MCF 10A (cell line): ENCODE measurements at regions of chr6 and their contacts with region 1.

Region 1: GRCh38 chr6:56292505-56293181 is 45.3 kb upstream of the COL21A1 start:
- DNase-seq: peak; percentile 71
- H3K4me3 Mint-ChIP-seq: no peak overlapping the region
- H3K27ac Mint-ChIP-seq: no peak overlapping the region
- H3K4me1 Mint-ChIP-seq: peaks cover 6% of the 10 kb centered on the region
- H3K27me3 Mint-ChIP-seq: no peaks in the 10 kb centered on the region
- CTCF ChIP-seq: peak; percentile 61

Region 2: GRCh38 chr6:55276745-55277530 is 1015.7 kb before region 1 on chr6:
- CTCF ChIA-PET with region 1: interaction called, 14 read pairs
- POLR2A ChIA-PET with region 1: no interaction called
- intact Hi-C with region 1: loop called (anchors 5 kb)
- DNase-seq: peak; percentile 72
- H3K4me3 Mint-ChIP-seq: no peak overlapping the region
- H3K27ac Mint-ChIP-seq: no peak overlapping the region
- H3K4me1 Mint-ChIP-seq: no peaks in the 10 kb centered on the region
- H3K27me3 Mint-ChIP-seq: no peaks in the 10 kb centered on the region
- CTCF ChIP-seq: peak; percentile 64

Region 3: GRCh38 chr6:55886185-55886836 is 406.3 kb before region 1 on chr6:
- CTCF ChIA-PET with region 1: no interaction called
- POLR2A ChIA-PET with region 1: no interaction called
- intact Hi-C with region 1: loop called (anchors 10 kb)
- DNase-seq: peak; percentile 34
- H3K4me3 Mint-ChIP-seq: no peak overlapping the region
- H3K27ac Mint-ChIP-seq: no peak overlapping the region
- H3K4me1 Mint-ChIP-seq: peaks cover 18% of the 10 kb centered on the region
- H3K27me3 Mint-ChIP-seq: no peaks in the 10 kb centered on the region
- CTCF ChIP-seq: peak; percentile 50

Region 4: GRCh38 chr6:55980627-55981211 is 311.9 kb before region 1 on chr6:
- CTCF ChIA-PET with region 1: interaction called, 95 read pairs
- POLR2A ChIA-PET with region 1: interaction called, 6 read pairs
- intact Hi-C with region 1: loop called (anchors 1 kb)
- DNase-seq: peak; percentile 68
- H3K4me3 Mint-ChIP-seq: no peak overlapping the region
- H3K27ac Mint-ChIP-seq: no peak overlapping the region
- H3K4me1 Mint-ChIP-seq: no peaks in the 10 kb centered on the region
- H3K27me3 Mint-ChIP-seq: no peaks in the 10 kb centered on the region
- CTCF ChIP-seq: peak; percentile 79

Region 5: GRCh38 chr6:56025795-56026194 is 266.8 kb before region 1 on chr6:
- CTCF ChIA-PET with region 1: interaction called, 17 read pairs
- POLR2A ChIA-PET with region 1: no interaction called
- intact Hi-C with region 1: no loop called
- DNase-seq: no peak
- H3K4me3 Mint-ChIP-seq: no peak overlapping the region
- H3K27ac Mint-ChIP-seq: no peak overlapping the region
- H3K4me1 Mint-ChIP-seq: peaks cover 5% of the 10 kb centered on the region
- H3K27me3 Mint-ChIP-seq: no peaks in the 10 kb centered on the region
- CTCF ChIP-seq: no peak

Region 6: DNA sequence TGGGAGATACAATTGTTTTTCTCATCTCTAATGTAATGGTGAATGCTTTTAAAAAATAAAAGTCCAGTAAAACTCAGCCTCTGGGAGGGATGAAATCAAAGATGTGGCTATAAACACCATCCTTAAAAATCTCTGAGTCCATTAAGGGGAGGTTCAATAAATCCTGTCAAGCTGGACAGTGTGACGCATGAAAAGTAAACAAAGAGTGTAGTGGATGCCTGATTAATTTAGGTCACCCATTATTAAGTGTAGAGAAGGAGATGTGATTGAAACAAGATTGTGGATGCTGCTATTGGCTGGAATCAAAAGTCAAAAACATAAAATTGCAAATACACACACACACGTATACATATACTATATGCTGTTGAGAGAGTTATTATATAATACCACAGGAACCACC is 161.2 kb before region 1 on chr6:
- CTCF ChIA-PET with region 1: interaction called, 13 read pairs
- POLR2A ChIA-PET with region 1: no interaction called
- intact Hi-C with region 1: no loop called
- DNase-seq: no peak
- H3K4me3 Mint-ChIP-seq: no peak overlapping the region
- H3K27ac Mint-ChIP-seq: no peak overlapping the region
- H3K4me1 Mint-ChIP-seq: no peaks in the 10 kb centered on the region
- H3K27me3 Mint-ChIP-seq: no peaks in the 10 kb centered on the region
- CTCF ChIP-seq: no peak

Region 7: DNA sequence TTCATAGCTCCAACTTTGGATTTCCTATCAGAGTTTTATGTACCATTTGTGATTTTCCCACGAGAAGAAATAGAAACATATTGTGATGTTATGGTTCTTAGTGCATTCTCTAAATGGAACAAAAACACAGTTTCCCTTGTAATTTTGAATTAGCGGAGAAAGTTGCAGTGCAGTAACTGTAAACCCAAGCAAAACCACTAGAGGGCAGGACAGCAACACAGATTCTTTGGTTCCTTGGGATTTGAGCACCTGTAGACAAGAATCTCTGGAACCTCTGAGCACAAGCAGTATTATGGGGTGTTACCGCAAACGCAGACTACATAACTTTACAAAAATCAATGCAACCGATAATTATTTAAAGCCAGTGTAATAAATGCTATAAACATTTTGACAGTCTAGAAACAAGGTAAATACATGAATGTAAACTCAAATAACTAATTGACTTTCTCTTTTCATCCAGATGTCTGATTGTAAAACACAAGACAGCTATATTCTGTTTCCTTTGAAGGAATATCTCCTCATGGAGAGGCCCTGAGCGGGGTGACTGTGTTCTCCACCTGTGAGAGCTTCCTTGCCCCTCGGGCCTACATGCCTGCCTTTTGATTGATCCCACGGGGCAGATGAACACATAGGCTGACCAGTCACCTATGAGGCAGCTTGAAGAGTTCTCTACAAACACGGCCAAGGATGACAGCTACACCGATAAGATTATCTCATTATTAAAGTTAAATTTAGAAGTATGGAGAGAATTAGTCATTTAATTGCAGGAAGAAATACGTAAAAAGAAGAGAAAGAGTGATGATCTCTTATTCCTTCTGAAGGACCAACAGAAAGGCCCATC is 22.3 kb after region 1 on chr6:
- CTCF ChIA-PET with region 1: interaction called, 10 read pairs
- POLR2A ChIA-PET with region 1: no interaction called
- intact Hi-C with region 1: no loop called
- DNase-seq: peak; percentile 65
- H3K4me3 Mint-ChIP-seq: no peak overlapping the region
- H3K27ac Mint-ChIP-seq: no peak overlapping the region
- H3K4me1 Mint-ChIP-seq: no peaks in the 10 kb centered on the region
- H3K27me3 Mint-ChIP-seq: no peaks in the 10 kb centered on the region
- CTCF ChIP-seq: peak; percentile 87